Activated CD4-positive, alpha-beta T cell treated with anti-CD3 and anti-CD28 coated beads, Interleukin-2, amount 10 ng/mL, durations not matched to agents 24 days and 14 days (primary cell): ENCODE measurements at regions of chr16 and their contacts with region 1.

Region 1: GRCh38 chr16:75110637-75111513 is 5.7 kb downstream of the LDHD start:
- DNase-seq: peak; percentile 95
- H3K4me3 Mint-ChIP-seq: peak overlapping the region; percentile 84
- H3K27ac Mint-ChIP-seq: peak overlapping the region; percentile 95
- H3K4me1 Mint-ChIP-seq: peaks cover 57% of the 10 kb centered on the region
- H3K27me3 Mint-ChIP-seq: no peaks in the 10 kb centered on the region

Region 2: GRCh38 chr16:74813109-74813641 is 297.7 kb before region 1 on chr16:
- intact Hi-C with region 1: loop called (anchors 1 kb)
- DNase-seq: peak; percentile 93
- H3K4me3 Mint-ChIP-seq: peak overlapping the region; percentile 35
- H3K27ac Mint-ChIP-seq: no peak overlapping the region
- H3K4me1 Mint-ChIP-seq: peaks cover 2% of the 10 kb centered on the region
- H3K27me3 Mint-ChIP-seq: peaks cover 3% of the 10 kb centered on the region

Region 3: GRCh38 chr16:75064403-75065148 is 46.3 kb before region 1 on chr16:
- intact Hi-C with region 1: loop called (anchors 2 kb)
- DNase-seq: peak; percentile 74
- H3K4me3 Mint-ChIP-seq: peak overlapping the region; percentile 69
- H3K27ac Mint-ChIP-seq: peak overlapping the region; percentile 85
- H3K4me1 Mint-ChIP-seq: peaks cover 50% of the 10 kb centered on the region
- H3K27me3 Mint-ChIP-seq: no peaks in the 10 kb centered on the region

Region 4: GRCh38 chr16:75074920-75075687 is 35.8 kb before region 1 on chr16:
- intact Hi-C with region 1: loop called (anchors 1 kb)
- DNase-seq: peak; percentile 95
- H3K4me3 Mint-ChIP-seq: peak overlapping the region; percentile 89
- H3K27ac Mint-ChIP-seq: peak overlapping the region; percentile 98
- H3K4me1 Mint-ChIP-seq: peaks cover 63% of the 10 kb centered on the region
- H3K27me3 Mint-ChIP-seq: no peaks in the 10 kb centered on the region

Region 5: GRCh38 chr16:75099756-75100602 is 10.9 kb before region 1 on chr16:
- intact Hi-C with region 1: loop called (anchors 1 kb)
- DNase-seq: peak; percentile 86
- H3K4me3 Mint-ChIP-seq: peak overlapping the region; percentile 74
- H3K27ac Mint-ChIP-seq: peak overlapping the region; percentile 95
- H3K4me1 Mint-ChIP-seq: peaks cover 63% of the 10 kb centered on the region
- H3K27me3 Mint-ChIP-seq: no peaks in the 10 kb centered on the region

Region 6: DNA sequence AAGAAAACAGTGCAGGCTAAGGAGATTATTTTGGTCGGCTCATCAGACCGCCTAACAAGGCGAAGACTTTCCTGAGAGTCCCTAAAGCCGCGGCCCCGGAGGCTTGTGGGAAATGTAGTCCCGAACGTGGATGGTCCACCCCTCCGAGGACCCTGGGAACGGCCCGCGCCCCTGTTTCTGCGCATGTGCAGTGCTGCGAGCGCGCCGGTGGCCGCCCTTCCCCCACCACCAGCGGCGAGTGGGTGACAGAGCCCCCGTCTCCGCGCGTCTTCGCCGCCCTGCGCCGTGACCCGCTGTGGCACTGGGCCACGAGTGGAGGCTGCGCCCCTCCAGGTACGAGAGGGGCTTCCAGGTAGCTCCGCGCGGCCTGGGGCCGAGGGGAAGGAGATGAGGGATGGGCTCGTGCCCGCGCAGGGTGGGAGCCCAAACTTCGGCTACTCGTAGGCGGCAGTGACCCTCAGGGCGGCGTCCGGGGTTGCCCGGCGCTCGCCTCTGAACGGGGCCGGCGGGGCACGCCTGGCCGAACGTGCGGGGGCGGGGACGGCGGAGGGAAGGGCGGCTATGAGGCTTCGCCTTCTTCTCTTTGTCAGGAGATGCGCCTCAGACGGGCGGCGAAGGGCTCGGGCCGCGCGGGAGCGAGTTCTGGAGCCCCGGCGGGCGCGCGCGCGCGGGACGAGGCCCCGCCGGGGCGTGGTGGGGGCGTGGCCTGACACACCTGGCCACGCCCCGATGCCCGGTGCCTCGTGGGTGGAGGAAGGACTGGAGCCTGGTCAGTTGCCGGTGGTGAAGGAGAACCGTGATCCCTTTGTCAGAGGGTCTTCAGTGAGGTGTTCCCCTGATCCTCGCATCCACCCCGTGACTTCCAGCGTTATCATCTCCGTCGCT is 37.7 kb after region 1 on chr16 and contains the start of gene ZFP1:
- intact Hi-C with region 1: loop called (anchors 2 kb)
- DNase-seq: peak; percentile 98
- H3K4me3 Mint-ChIP-seq: peak within 1 kb of the TSS; percentile 92
- H3K27ac Mint-ChIP-seq: peak within 1 kb of the TSS; percentile 87
- H3K4me1 Mint-ChIP-seq: peaks cover 19% of the 10 kb centered on the region
- H3K27me3 Mint-ChIP-seq: no peaks in the 10 kb centered on the region
- total RNA-seq, gene ZFP1: 14.3 and 16.5 TPM in 2 replicates